WTC11 (cell line): ENCODE measurements at regions of chr6 and their contacts with region 1.

Region 1: DNA sequence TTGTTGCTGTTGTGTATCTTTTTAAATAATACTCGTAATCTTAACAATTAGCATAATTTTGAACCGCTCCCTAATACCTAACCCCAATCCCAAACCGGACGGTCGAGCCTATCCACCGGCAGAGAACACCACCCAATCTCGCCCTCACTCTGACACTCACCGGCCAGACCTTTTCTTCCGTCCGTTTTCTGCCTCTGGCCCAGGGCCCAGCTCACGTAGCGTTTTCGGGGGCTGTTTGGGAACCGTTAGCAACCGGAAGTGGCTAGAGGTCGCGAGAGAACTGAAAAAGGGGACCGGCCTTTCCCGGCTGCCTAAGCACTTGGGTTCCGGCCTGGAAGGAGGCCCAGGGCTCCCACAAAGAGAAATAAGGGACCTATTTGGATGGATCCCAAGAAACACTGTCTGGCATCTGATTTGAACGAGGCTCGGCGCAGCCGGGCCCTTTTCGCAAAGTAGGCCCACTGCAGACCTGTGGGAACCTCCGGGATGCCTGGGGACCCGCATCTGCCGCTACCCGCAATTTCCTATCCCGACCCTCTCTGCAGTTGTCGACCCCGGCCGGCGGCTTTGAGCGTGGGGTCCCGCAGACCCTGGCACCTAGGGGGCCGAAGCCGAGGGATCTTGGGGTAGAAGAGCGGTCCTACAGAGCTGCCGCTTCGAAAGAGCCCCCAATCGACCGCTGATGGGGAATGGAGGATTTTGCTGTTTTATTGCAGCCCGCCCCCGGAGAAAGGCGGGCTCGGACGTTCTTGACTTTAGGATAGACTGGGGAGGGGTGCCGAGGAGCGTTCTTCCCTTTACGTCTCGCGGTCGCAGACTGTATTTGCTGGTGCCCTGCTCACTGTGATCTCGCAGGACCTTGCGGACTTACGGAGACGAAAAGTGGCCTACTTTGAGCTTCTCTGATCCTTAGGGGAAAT is 4.8 kb upstream of the ZKSCAN8 start:
- DNase-seq: peak; percentile 86
- ATAC-seq: peak; percentile 75
- H3K4me3 Mint-ChIP-seq: peak overlapping the region; percentile 95
- H3K27ac Mint-ChIP-seq: peak overlapping the region; percentile 92
- H3K4me1 Mint-ChIP-seq: peaks cover 21% of the 10 kb centered on the region
- H3K27me3 Mint-ChIP-seq: peaks cover 34% of the 10 kb centered on the region
- CTCF ChIP-seq: no peak

Region 2: DNA sequence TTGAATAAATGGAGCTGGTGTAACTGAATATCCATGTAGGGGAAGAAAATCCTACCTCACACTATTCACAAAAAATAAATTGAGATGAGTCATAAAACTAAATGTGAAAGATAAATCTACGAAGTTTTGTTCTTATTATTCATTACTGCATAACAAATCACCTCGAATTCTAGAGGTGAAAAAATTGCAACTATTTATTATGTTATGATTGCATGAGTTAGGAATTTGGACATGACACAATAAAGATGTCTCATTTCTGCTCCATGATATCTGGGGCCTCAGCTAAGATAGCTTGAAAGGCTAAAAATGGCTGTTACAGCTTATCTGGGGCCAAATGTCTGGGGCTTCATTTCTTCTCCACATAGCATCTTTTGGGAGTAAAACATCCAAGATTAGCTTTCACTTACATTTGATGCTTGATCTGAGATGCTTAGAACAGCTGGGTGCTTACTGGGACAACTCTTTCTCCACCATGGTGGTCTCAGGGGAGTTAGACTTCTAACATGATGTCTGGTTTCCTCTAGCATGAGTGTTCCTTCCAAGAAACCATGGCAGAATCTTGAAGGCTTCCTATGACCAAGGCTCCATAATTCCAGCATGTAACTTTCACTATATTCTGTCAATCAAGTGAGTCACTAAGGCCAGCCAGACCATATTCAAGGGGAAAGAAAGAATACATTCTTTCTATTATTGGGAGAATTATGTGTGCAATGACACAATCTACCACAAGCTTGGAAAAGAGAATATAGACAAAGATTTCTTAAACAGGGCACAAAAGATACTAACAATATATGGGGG is 149.7 kb before region 1 on chr6:
- CTCF ChIA-PET with region 1: no interaction called
- POLR2A ChIA-PET with region 1: no interaction called
- DNase-seq: no peak
- ATAC-seq: no peak
- H3K4me3 Mint-ChIP-seq: no peak overlapping the region
- H3K27ac Mint-ChIP-seq: no peak overlapping the region
- H3K4me1 Mint-ChIP-seq: no peaks in the 10 kb centered on the region
- H3K27me3 Mint-ChIP-seq: peaks cover 35% of the 10 kb centered on the region
- CTCF ChIP-seq: no peak

Region 3: DNA sequence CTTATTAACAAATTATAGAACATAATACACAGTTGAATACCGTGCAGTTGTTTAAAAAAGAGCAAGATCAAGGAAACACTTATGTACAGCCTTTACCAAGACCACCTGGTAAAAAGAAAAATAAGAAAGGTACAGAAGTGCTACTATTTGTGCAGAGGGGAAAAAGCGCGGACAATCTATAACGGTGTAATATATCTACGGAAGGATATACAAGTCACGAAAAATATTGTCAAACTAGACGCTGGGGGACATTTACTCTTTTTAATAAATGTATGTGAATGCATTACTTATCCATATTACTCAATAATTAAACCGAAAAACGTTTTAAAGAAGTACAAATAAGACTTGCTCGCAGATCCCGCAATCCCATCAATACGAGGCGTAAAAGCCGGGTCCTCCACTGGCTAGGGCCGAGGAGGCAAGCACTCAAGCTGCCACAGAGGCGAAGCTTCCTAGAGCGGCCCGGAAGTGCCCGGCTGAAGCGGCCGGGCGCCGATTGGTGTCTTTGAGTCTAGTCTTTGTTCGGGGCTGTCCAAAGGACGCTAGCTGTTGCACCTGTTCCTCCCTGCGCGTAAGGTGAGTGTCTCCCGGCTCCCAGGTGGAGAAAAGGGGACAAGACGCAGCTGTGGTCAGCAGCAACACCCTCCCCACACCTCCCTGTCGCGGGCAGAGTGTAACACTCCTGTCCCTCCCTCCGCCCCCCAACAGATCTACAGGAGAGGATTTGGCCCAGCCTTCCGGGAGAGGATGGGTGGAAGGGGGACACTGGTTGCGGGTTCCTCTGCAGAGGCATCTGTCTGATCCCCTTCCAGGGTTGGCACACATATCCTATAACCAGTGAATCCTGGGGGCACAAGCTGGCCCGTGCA is 12.5 kb before region 1 on chr6 and contains the start of gene ZSCAN16:
- CTCF ChIA-PET with region 1: interaction called, 4 read pairs
- POLR2A ChIA-PET with region 1: interaction called, 10 read pairs
- DNase-seq: peak; percentile 87
- ATAC-seq: peak; percentile 100
- H3K4me3 Mint-ChIP-seq: peak within 1 kb of the TSS; percentile 97
- H3K27ac Mint-ChIP-seq: peak within 1 kb of the TSS; percentile 91
- H3K4me1 Mint-ChIP-seq: peaks cover 11% of the 10 kb centered on the region
- H3K27me3 Mint-ChIP-seq: no peaks in the 10 kb centered on the region; the same call in 1 of the 2 replicates
- CTCF ChIP-seq: no peak
- total RNA-seq, gene ZSCAN16: 5.7 to 7.3 TPM (median 7.1 TPM) in 3 replicates

Region 4: DNA sequence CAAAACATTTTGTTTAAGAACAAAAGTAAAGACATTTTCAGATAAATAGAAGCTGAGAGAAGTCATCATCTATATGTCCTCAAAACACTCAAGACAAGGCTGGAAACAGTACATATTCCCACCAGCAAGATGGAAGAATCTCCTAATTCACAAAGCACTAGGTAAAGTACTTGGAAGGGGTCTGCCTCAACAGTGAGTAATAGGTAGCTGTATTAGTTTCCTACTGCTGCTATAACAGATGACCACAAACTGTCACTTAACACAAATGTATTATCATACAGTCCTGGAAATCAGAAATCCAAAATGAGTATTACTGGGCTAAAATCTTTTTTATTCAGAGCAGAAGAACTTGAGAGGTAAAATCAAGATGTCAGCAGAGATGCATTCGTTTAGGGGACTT is 45.4 kb after region 1 on chr6:
- CTCF ChIA-PET with region 1: no interaction called
- POLR2A ChIA-PET with region 1: no interaction called
- DNase-seq: no peak
- ATAC-seq: no peak
- H3K4me3 Mint-ChIP-seq: no peak overlapping the region
- H3K27ac Mint-ChIP-seq: no peak overlapping the region
- H3K4me1 Mint-ChIP-seq: no peaks in the 10 kb centered on the region
- H3K27me3 Mint-ChIP-seq: peaks cover 66% of the 10 kb centered on the region
- CTCF ChIP-seq: no peak

Region 5: GRCh38 chr6:28349344-28349891 is 212.6 kb after region 1 on chr6:
- CTCF ChIA-PET with region 1: no interaction called
- POLR2A ChIA-PET with region 1: no interaction called
- DNase-seq: no peak
- ATAC-seq: no peak
- H3K4me3 Mint-ChIP-seq: peak overlapping the region; percentile 98
- H3K27ac Mint-ChIP-seq: peak overlapping the region; percentile 94
- H3K4me1 Mint-ChIP-seq: peaks cover 14% of the 10 kb centered on the region
- H3K27me3 Mint-ChIP-seq: peaks cover 25% of the 10 kb centered on the region
- CTCF ChIP-seq: no peak